Calu3 (cell line): ENCODE measurements at regions of chr2 and their contacts with region 1.

Region 1: DNA sequence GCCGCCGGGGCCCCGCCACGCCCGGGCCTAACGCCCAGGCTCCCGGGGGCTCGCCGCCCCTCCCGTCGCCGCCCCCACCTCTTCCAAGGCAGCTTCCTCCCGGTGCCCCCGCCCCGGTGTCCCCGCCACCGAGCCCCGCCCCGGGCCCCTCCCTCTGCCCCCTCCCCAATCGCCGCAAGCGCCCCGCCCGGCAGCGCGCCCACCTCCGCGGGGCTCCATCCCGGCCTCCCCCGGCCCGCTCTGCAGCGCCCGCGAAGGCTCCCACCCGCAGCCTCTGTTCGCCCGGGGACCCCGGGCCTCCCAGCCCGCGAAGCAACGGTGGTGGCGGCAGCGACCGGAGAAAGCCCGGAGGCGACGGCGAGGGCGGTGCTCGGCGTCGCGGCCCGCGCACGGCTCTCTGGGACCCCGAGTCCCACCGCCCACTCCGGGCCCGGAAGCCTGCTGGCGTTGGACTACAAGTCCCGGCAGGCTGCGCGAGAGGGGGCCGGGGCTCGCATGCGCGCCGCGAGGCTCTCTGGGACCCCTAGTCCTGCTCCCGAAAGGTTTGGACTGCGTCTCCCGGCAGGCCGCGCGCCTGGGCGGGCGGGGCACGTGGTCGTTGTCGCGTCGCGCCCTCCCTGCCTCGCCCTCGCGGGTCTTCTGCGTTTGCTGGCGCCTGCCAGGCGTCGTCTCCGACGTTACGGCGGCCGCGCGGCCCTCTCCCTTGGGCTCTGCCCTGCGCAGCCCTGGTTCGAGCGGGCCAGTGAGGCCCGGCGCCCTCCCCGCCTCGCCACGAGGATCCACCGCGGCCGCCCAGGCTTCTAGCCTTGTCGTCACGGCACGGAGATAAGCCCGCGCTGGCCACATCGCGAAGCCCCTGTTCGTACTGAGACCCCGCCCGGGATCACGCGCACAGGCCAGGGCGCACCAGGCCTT is at the start of gene STK25:
- DNase-seq: peak; percentile 99
- H3K4me3 Mint-ChIP-seq: peak within 1 kb of the TSS; percentile 90
- H3K27ac Mint-ChIP-seq: peak within 1 kb of the TSS; percentile 60
- H3K4me1 Mint-ChIP-seq: peaks cover 16% of the 10 kb centered on the region
- H3K27me3 Mint-ChIP-seq: no peaks in the 10 kb centered on the region
- CTCF ChIP-seq: peak; percentile 18
- total RNA-seq, gene STK25: 149 and 159 TPM in 2 replicates

Region 2: GRCh38 chr2:241498115-241499070 is 10.1 kb before region 1 on chr2:
- CTCF ChIA-PET with region 1: no interaction called
- intact Hi-C with region 1: no loop called
- DNase-seq: no peak
- H3K4me3 Mint-ChIP-seq: no peak overlapping the region
- H3K27ac Mint-ChIP-seq: no peak overlapping the region
- H3K4me1 Mint-ChIP-seq: no peaks in the 10 kb centered on the region
- H3K27me3 Mint-ChIP-seq: no peaks in the 10 kb centered on the region
- CTCF ChIP-seq: no peak

Region 3: DNA sequence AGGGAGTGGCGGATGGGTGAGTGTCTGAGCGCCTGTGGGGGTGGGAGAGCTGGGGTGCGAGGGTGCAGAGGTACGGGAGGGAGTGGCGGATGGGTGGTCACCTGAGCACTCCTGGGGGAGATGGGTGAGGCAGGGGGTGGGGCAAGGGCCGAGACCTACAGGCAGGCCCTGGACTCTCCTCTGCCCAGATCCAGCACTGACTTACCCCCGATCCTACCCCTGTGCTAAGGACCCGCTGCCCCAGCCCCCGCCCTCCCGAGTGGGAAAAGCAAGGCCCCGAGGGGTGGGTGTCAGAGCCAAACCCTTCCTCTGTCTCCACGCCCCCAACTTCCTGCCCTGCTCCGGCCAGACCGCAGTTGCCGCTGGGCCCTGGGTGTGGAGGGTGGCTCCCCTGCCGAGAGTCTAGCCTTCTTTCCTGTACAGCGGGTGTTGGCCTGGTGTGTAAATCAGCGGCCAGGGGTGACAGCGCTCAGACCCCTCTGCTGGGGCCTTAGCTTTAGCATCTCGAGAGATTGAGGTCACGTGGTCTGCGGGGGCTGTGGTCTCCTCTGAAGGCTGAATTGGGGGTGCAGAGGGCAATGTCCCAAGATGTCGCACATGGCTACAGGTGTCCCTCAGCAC is 62.6 kb after region 1 on chr2:
- CTCF ChIA-PET with region 1: no interaction called
- intact Hi-C with region 1: no loop called
- DNase-seq: no peak
- H3K4me3 Mint-ChIP-seq: no peak overlapping the region
- H3K27ac Mint-ChIP-seq: no peak overlapping the region
- H3K4me1 Mint-ChIP-seq: no peaks in the 10 kb centered on the region
- H3K27me3 Mint-ChIP-seq: no peaks in the 10 kb centered on the region
- CTCF ChIP-seq: no peak

Region 4: GRCh38 chr2:241598480-241598879 is 90.0 kb after region 1 on chr2:
- CTCF ChIA-PET with region 1: interaction called, 5 read pairs
- intact Hi-C with region 1: loop called (anchors 5 kb)
- DNase-seq: peak; percentile 58
- H3K4me3 Mint-ChIP-seq: no peak overlapping the region
- H3K27ac Mint-ChIP-seq: no peak overlapping the region
- H3K4me1 Mint-ChIP-seq: no peaks in the 10 kb centered on the region
- H3K27me3 Mint-ChIP-seq: no peaks in the 10 kb centered on the region
- CTCF ChIP-seq: peak; percentile 36